ENCODE measurements at regions of chr2 and their contacts with region 1.

Region 1: DNA sequence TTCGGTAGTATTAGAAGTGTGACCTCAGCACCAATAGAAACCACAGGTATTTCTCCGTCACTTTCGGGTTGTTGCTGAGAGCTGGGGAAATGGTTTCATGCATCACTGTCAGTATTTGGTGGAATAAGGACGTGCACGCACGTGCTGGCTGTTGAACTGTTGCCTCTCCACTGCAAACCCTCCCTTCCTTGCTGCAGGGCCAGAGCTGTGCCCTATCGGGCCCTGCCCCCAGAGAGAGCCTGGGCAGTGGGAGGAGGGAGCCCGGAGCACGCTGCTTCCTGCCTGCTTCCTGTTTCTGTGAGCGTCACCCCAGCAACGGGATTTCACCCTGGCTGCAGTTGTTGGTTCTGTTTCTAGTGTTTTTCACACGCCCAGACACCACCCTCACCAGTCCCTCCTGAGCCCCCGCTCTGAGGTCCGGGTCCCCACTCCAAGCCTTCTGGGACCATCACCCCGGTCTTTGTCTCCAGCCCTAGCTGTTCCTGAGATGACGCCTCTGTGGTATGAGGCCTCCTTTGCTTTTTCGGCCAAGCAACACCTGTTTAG is 47.4 kb downstream of the LRRFIP1 start:
- DNase-seq: no peak
- H3K4me3 ChIP-seq: no peak overlapping the region
- H3K27ac ChIP-seq: peak overlapping the region; percentile 61
- H3K27me3 ChIP-seq: no peaks in the 10 kb centered on the region
- CTCF ChIP-seq: no peak

Region 2: GRCh38 chr2:237547841-237548416 is 126.9 kb before region 1 on chr2:
- CTCF ChIA-PET with region 1: no interaction called
- POLR2A ChIA-PET with region 1: no interaction called
- DNase-seq: no peak
- H3K4me3 ChIP-seq: no peak overlapping the region
- H3K27ac ChIP-seq: no peak overlapping the region
- H3K27me3 ChIP-seq: no peaks in the 10 kb centered on the region
- CTCF ChIP-seq: no peak

Region 3: DNA sequence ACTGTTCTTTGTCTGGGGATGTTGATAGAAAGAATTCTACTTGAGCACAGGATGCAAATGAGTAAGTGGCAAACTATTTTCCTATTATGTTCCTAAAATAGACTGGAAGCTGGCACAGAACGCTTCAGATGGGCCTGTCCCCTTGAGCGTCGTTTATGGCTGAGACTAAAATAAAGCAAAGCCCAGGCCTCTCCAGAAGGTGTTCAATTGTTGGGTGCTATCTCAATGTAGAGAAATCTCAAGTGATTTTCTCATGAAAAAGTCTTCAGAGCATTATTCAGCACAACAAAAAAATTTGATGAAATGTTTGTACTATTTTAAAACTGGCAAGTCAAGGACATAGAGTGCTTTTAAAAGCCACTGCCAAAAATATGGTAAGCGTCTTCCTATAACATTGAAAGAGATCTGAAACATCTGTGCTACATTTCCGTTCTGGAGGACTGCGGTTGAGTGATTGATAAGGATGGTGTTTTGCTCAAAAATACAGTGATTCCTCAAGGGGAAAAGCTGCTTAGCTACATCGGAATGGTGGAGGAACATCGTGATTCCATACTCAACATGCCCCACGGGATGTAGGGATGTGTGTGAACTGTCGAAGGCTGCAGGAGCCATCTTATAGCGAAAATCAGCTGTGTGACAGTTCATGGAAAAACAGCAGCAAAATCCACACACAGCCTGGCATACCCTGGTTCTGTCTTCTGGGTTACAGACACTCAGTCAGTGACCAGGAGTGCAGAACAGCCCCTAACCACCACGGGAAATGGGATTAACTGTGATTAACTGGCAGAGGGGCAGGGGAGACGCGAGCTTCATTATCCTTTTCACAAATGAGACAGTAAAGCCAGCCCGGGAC is 57.8 kb before region 1 on chr2:
- CTCF ChIA-PET with region 1: no interaction called
- POLR2A ChIA-PET with region 1: interaction called, 13 read pairs
- DNase-seq: peak; percentile 47
- H3K4me3 ChIP-seq: no peak overlapping the region
- H3K27ac ChIP-seq: peak overlapping the region; percentile 98
- H3K27me3 ChIP-seq: no peaks in the 10 kb centered on the region
- CTCF ChIP-seq: no peak

Region 4: GRCh38 chr2:237685408-237685807 is 10.6 kb after region 1 on chr2:
- CTCF ChIA-PET with region 1: interaction called, 12 read pairs
- POLR2A ChIA-PET with region 1: interaction called, 30 read pairs
- DNase-seq: no peak
- H3K4me3 ChIP-seq: no peak overlapping the region
- H3K27ac ChIP-seq: no peak overlapping the region
- H3K27me3 ChIP-seq: no peaks in the 10 kb centered on the region
- CTCF ChIP-seq: peak; percentile 44

Region 5: GRCh38 chr2:237691908-237692600 is 17.2 kb after region 1 on chr2:
- CTCF ChIA-PET with region 1: interaction called, 11 read pairs
- POLR2A ChIA-PET with region 1: interaction called, 30 read pairs
- DNase-seq: peak; percentile 70
- H3K4me3 ChIP-seq: peak overlapping the region; percentile 88
- H3K27ac ChIP-seq: peak overlapping the region; percentile 65
- H3K27me3 ChIP-seq: no peaks in the 10 kb centered on the region
- CTCF ChIP-seq: no peak